ENCODE measurements at regions of chr12 and their contacts with region 1.

Region 1: DNA sequence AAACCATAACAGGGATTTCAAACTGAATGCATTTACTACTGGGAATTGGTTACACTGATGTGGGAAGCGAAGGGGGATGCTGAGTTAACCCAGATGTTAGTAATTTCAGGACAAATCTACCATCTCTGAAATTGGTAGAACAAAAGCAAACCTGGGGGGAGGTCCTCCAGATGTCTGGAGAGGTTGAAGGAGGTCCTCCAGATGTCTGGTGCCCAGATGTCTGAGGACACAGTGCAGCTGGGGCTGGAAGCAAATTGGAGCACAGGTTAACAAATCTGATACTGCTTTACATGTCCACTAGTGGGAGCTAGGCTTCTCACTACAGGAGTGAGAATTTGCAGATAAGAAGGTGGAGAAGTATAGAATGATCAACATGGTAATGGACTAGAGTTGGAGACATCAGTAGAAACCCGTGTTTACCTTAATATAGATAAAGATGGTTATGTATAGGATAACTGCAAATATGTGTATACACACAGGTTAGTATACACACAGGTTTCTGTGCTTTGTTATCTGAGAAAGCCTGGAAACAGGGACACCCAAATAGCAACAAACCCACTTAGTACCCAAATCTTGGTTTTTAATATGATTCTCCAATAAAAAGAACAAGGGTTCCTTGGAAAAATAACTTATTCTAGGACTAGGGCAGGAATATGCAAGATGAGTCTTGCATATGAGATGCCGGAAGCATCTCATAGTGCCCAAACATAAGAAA is 162.5 kb downstream of the C12orf50 start:
- DNase-seq: peak; percentile 44
- H3K4me3 ChIP-seq: no peak overlapping the region
- H3K27ac ChIP-seq: no peak overlapping the region
- H3K4me1 ChIP-seq: no peaks in the 10 kb centered on the region
- H3K27me3 ChIP-seq: no peaks in the 10 kb centered on the region
- CTCF ChIP-seq: peak; percentile 62

Region 2: DNA sequence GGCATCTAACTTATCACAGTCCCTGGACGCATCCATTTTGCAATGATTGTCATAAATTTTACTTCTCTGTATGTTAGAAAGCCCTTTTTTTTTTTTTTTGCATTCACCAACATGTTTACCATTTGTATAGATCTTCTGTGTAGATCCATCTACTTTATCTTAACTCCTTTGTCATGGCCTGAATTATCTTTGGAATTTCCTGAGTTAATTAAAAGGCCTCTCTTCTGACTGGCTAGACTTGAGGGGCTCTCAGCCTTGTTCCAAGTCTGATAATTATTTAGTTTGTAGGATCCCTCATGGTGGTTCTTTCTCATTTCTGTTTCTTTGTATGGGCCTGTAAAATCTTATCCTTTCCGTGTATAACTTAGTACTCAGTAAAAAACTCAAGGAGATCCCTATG is 224.5 kb before region 1 on chr12:
- CTCF ChIA-PET with region 1: no interaction called
- POLR2A ChIA-PET with region 1: no interaction called
- intact Hi-C with region 1: no loop called
- DNase-seq: peak; percentile 41
- H3K4me3 ChIP-seq: no peak overlapping the region
- H3K27ac ChIP-seq: no peak overlapping the region
- H3K4me1 ChIP-seq: no peaks in the 10 kb centered on the region
- H3K27me3 ChIP-seq: no peaks in the 10 kb centered on the region
- CTCF ChIP-seq: no peak

Region 3: GRCh38 chr12:87656317-87656716 is 210.4 kb before region 1 on chr12:
- CTCF ChIA-PET with region 1: no interaction called
- POLR2A ChIA-PET with region 1: no interaction called
- intact Hi-C with region 1: no loop called
- DNase-seq: no peak
- H3K4me3 ChIP-seq: no peak overlapping the region
- H3K27ac ChIP-seq: no peak overlapping the region
- H3K4me1 ChIP-seq: no peaks in the 10 kb centered on the region
- H3K27me3 ChIP-seq: no peaks in the 10 kb centered on the region
- CTCF ChIP-seq: no peak

Region 4: GRCh38 chr12:87953256-87953860 is 86.6 kb after region 1 on chr12:
- CTCF ChIA-PET with region 1: no interaction called
- POLR2A ChIA-PET with region 1: no interaction called
- intact Hi-C with region 1: loop called (anchors 5 kb)
- DNase-seq: peak; percentile 63
- H3K4me3 ChIP-seq: no peak overlapping the region
- H3K27ac ChIP-seq: no peak overlapping the region
- H3K4me1 ChIP-seq: no peaks in the 10 kb centered on the region
- H3K27me3 ChIP-seq: no peaks in the 10 kb centered on the region
- CTCF ChIP-seq: peak; percentile 73

Region 5: GRCh38 chr12:88063375-88063774 is 196.6 kb after region 1 on chr12:
- CTCF ChIA-PET with region 1: no interaction called
- POLR2A ChIA-PET with region 1: interaction called, 11 read pairs
- intact Hi-C with region 1: no loop called
- DNase-seq: peak; percentile 58
- H3K4me3 ChIP-seq: no peak overlapping the region
- H3K27ac ChIP-seq: no peak overlapping the region
- H3K4me1 ChIP-seq: peaks cover 10% of the 10 kb centered on the region
- H3K27me3 ChIP-seq: no peaks in the 10 kb centered on the region
- CTCF ChIP-seq: no peak